Astrocyte of the cerebellum (primary cell): ENCODE measurements at regions of chr13 and their contacts with region 1.

Region 1: GRCh38 chr13:44710576-44710975 is 134.4 kb upstream of the TSC22D1 start:
- DNase-seq: peak; percentile 93
- H3K4me3 ChIP-seq: no peak overlapping the region
- CTCF ChIP-seq: no peak

Region 2: GRCh38 chr13:44577236-44578066 is 133.1 kb before region 1 on chr13:
- in situ Hi-C with region 1: loop called (anchors 10 kb)
- DNase-seq: peak; percentile 93
- H3K4me3 ChIP-seq: peak overlapping the region; percentile 86
- CTCF ChIP-seq: no peak